HCT116 (cell line): ENCODE measurements at regions of chr13 and their contacts with region 1.

Region 1: GRCh38 chr13:21476893-21477472 is 17.9 kb upstream of the ZDHHC20 start:
- DNase-seq: peak; percentile 76
- ATAC-seq: peak; percentile 89
- H3K4me3 ChIP-seq: peak overlapping the region; percentile 40 to 49
- H3K27ac ChIP-seq: 0 out of 2 replicates have a peak overlapping the region, but pooled peaks have one; percentile 1
- H3K4me1 ChIP-seq: peaks cover 0 to 12% of the 10 kb centered on the region in 2 experiments; a peak in 2 of 4 replicates
- H3K27me3 ChIP-seq: no peaks in the 10 kb centered on the region
- CTCF ChIP-seq: peak; percentile 79 to 98 (median 97)
- POLR2A ChIP-seq: no peak
- RAD21 ChIP-seq: peak; percentile 75

Region 2: DNA sequence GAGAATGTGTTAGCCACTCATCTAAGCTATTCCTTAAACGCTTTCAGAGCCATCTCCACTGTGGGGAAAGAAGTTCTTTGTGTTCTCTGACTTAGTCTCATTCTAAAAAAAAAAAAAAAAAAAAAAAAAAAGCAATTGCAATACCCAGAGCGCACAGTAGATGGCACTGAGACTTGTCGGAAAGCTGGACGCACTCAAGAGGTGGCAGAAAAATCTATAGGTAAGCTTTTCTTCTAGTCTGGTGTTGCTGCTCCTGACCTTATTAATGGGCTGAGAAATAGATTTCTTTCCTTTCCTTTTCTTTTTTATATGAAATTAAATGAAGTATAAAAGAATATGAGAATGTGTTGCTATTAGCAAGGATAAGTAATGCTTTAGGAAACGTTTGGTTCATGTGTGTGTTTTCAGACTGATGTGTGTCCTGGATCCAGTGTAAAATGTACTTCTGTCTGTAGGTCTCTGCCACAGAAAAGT is 1279.6 kb before region 1 on chr13:
- CTCF ChIA-PET with region 1: no interaction called
- POLR2A ChIA-PET with region 1: no interaction called
- RAD21 ChIA-PET with region 1: no interaction called
- intact Hi-C with region 1: loop called (anchors 10 kb)
- DNase-seq: peak; percentile 64
- ATAC-seq: peak; percentile 54
- H3K4me3 ChIP-seq: peak overlapping the region; percentile 17 to 22; a peak in 2 of 4 replicates
- H3K27ac ChIP-seq: no peak overlapping the region
- H3K4me1 ChIP-seq: peaks cover 0 to 16% of the 10 kb centered on the region in 2 experiments; a peak in 2 of 4 replicates
- H3K27me3 ChIP-seq: peaks cover 10% of the 10 kb centered on the region; the same call in 1 of the 2 replicates
- CTCF ChIP-seq: peak; percentile 71 to 87 (median 79); a peak in 5 of 6 replicates
- POLR2A ChIP-seq: no peak
- RAD21 ChIP-seq: peak; percentile 76

Region 3: DNA sequence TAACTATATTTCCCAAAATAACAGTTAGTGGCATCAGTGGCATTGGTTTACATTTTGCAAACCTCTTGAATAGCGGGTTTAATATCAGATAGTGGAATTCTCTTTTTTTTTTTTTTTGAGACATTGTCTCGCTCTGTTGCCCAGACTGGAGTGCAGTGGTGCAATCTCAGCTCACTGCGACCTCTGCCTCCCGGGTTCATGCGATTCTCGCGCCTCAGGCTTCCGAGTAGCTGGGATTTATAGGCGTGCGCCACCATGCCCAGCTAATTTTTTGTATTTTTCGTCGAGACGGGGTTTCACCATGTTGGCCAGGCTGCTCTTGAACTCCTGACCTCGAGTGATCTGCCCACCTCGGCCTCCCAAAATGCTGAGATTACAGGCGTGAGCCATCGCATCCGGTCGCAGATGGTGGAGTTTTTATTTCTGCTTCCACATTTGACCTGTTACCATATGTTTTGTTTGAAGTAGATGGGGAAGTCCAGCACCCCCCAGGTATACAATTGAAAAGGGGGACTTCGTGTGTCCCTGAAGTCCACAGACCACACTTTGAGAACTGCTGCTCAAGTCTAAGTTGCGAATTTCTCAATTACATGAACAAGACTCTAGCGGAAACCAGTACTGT is 533.9 kb before region 1 on chr13:
- CTCF ChIA-PET with region 1: interaction called, 5 read pairs
- POLR2A ChIA-PET with region 1: no interaction called
- RAD21 ChIA-PET with region 1: no interaction called
- intact Hi-C with region 1: loop called (anchors 1 kb)
- DNase-seq: no peak
- ATAC-seq: no peak
- H3K4me3 ChIP-seq: no peak overlapping the region
- H3K27ac ChIP-seq: no peak overlapping the region
- H3K4me1 ChIP-seq: peaks cover 0 to 8% of the 10 kb centered on the region in 2 experiments; a peak in 2 of 4 replicates
- H3K27me3 ChIP-seq: no peaks in the 10 kb centered on the region
- CTCF ChIP-seq: no peak
- POLR2A ChIP-seq: no peak
- RAD21 ChIP-seq: no peak

Region 4: GRCh38 chr13:21106089-21106488 is 370.9 kb before region 1 on chr13:
- CTCF ChIA-PET with region 1: interaction called, 5 read pairs
- POLR2A ChIA-PET with region 1: no interaction called
- RAD21 ChIA-PET with region 1: no interaction called
- intact Hi-C with region 1: loop called (anchors 1 kb)
- DNase-seq: no peak
- ATAC-seq: no peak
- H3K4me3 ChIP-seq: no peak overlapping the region
- H3K27ac ChIP-seq: no peak overlapping the region
- H3K4me1 ChIP-seq: peaks cover 0 to 3% of the 10 kb centered on the region in 2 experiments; a peak in 1 of 4 replicates
- H3K27me3 ChIP-seq: no peaks in the 10 kb centered on the region
- CTCF ChIP-seq: no peak
- POLR2A ChIP-seq: no peak
- RAD21 ChIP-seq: no peak

Region 5: GRCh38 chr13:21282065-21282464 is 194.9 kb before region 1 on chr13:
- CTCF ChIA-PET with region 1: no interaction called
- POLR2A ChIA-PET with region 1: no interaction called
- RAD21 ChIA-PET with region 1: no interaction called
- intact Hi-C with region 1: loop called (anchors 5 kb)
- DNase-seq: no peak
- ATAC-seq: no peak
- H3K4me3 ChIP-seq: no peak overlapping the region
- H3K27ac ChIP-seq: no peak overlapping the region
- H3K4me1 ChIP-seq: no peaks in the 10 kb centered on the region
- H3K27me3 ChIP-seq: no peaks in the 10 kb centered on the region
- CTCF ChIP-seq: no peak
- POLR2A ChIP-seq: no peak
- RAD21 ChIP-seq: no peak

Region 6: DNA sequence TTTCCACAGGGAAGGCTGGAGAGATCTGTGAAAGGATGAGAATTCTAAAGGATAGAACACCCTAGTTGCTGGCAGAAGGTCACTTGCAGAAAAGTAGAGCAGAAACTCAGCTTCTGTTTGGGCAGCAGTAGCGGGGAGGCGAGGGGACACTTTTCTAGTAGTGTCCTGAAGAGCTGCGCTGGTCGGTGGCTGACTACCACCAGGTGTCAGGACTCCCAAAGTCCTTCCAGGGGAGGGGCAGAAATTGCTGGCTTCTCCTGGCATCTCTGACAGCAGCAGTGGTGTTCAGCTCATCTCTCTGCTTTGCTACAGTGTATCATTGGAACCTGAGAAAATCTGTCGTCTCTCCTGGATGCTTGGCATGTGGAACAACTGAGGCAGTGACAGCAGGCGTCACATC is 138.8 kb before region 1 on chr13:
- CTCF ChIA-PET with region 1: no interaction called
- POLR2A ChIA-PET with region 1: no interaction called
- RAD21 ChIA-PET with region 1: no interaction called
- intact Hi-C with region 1: loop called (anchors 2 kb)
- DNase-seq: no peak
- ATAC-seq: peak; percentile 57
- H3K4me3 ChIP-seq: no peak overlapping the region
- H3K27ac ChIP-seq: no peak overlapping the region
- H3K4me1 ChIP-seq: peaks cover 3 to 4% of the 10 kb centered on the region in 2 experiments; a peak in 2 of 4 replicates
- H3K27me3 ChIP-seq: no peaks in the 10 kb centered on the region
- CTCF ChIP-seq: peak; percentile 17 to 28 (median 26); a peak in 1 of 6 replicates
- POLR2A ChIP-seq: no peak
- RAD21 ChIP-seq: peak; percentile 36; the same call in 1 of the 2 replicates

Region 7: GRCh38 chr13:21420706-21421105 is 56.3 kb before region 1 on chr13:
- CTCF ChIA-PET with region 1: no interaction called
- POLR2A ChIA-PET with region 1: no interaction called
- RAD21 ChIA-PET with region 1: no interaction called
- intact Hi-C with region 1: no loop called
- DNase-seq: no peak
- ATAC-seq: no peak
- H3K4me3 ChIP-seq: no peak overlapping the region
- H3K27ac ChIP-seq: no peak overlapping the region
- H3K4me1 ChIP-seq: 0 out of 4 replicates have a peak, but pooled peaks cover 0 to 3% of the 10 kb centered on the region in 2 experiments
- H3K27me3 ChIP-seq: no peaks in the 10 kb centered on the region
- CTCF ChIP-seq: no peak
- POLR2A ChIP-seq: no peak
- RAD21 ChIP-seq: no peak